HCT116 (cell line): ENCODE measurements at regions of chr2 and their contacts with region 1.

Region 1: GRCh38 chr2:182980115-182980514 is 58.1 kb downstream of the NCKAP1 start:
- DNase-seq: peak; percentile 16
- ATAC-seq: no peak
- H3K4me3 ChIP-seq: no peak overlapping the region
- H3K27ac ChIP-seq: no peak overlapping the region
- H3K4me1 ChIP-seq: no peaks in the 10 kb centered on the region
- H3K27me3 ChIP-seq: no peaks in the 10 kb centered on the region
- CTCF ChIP-seq: peak; percentile 18 to 64 (median 55); a peak in 3 of 6 replicates
- POLR2A ChIP-seq: no peak
- RAD21 ChIP-seq: peak; percentile 66

Region 2: GRCh38 chr2:182186132-182186735 is 793.9 kb before region 1 on chr2:
- CTCF ChIA-PET with region 1: no interaction called
- POLR2A ChIA-PET with region 1: no interaction called
- RAD21 ChIA-PET with region 1: no interaction called
- intact Hi-C with region 1: loop called (anchors 5 kb)
- DNase-seq: peak; percentile 27
- ATAC-seq: peak; percentile 72
- H3K4me3 ChIP-seq: no peak overlapping the region
- H3K27ac ChIP-seq: no peak overlapping the region
- H3K4me1 ChIP-seq: no peaks in the 10 kb centered on the region
- H3K27me3 ChIP-seq: no peaks in the 10 kb centered on the region
- CTCF ChIP-seq: peak; percentile 43 to 87 (median 74); a peak in 5 of 6 replicates
- POLR2A ChIP-seq: no peak
- RAD21 ChIP-seq: peak; percentile 90

Region 3: DNA sequence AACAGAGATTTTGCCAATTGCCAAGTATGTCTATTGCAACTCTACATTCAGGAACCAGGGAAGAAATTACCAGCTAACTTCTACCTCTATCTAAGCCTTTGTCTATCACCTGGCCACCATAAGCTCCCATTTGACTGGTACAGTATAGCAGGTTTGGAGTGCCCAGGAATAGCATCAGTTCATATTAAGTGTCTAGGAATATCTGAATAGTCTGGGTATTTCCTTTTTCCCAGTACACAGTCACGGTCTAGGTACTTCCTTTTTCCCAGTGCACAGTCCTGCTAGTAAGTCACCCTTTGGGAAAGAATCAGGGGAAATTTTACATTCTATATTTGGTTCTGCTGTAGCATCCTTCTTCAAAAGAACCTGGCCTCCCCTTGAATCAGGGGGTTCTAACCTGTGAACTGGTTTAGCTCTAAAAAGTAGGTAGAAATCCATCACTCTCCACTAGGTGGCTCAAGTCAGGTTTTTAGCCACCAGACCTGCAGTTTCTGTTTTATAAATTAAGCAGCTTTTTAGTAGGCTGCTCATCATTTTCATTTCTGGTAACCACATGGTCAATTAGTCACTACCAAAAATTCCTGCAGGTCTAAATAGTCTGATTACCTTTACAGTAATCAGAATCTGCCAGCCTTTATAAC is 313.3 kb before region 1 on chr2:
- CTCF ChIA-PET with region 1: interaction called, 11 read pairs
- POLR2A ChIA-PET with region 1: no interaction called
- RAD21 ChIA-PET with region 1: no interaction called
- intact Hi-C with region 1: loop called (anchors 10 kb)
- DNase-seq: peak; percentile 18
- ATAC-seq: peak; percentile 80
- H3K4me3 ChIP-seq: no peak overlapping the region
- H3K27ac ChIP-seq: no peak overlapping the region
- H3K4me1 ChIP-seq: no peaks in the 10 kb centered on the region
- H3K27me3 ChIP-seq: no peaks in the 10 kb centered on the region
- CTCF ChIP-seq: peak; percentile 31 to 75 (median 51); a peak in 5 of 6 replicates
- POLR2A ChIP-seq: no peak
- RAD21 ChIP-seq: peak; percentile 48

Region 4: GRCh38 chr2:182763311-182763912 is 216.7 kb before region 1 on chr2:
- CTCF ChIA-PET with region 1: interaction called, 45 read pairs
- POLR2A ChIA-PET with region 1: no interaction called
- RAD21 ChIA-PET with region 1: interaction called in 1 of 2 experiments, 6 read pairs
- intact Hi-C with region 1: loop called (anchors 1 kb)
- DNase-seq: peak; percentile 18
- ATAC-seq: peak; percentile 82
- H3K4me3 ChIP-seq: no peak overlapping the region
- H3K27ac ChIP-seq: no peak overlapping the region
- H3K4me1 ChIP-seq: no peaks in the 10 kb centered on the region
- H3K27me3 ChIP-seq: no peaks in the 10 kb centered on the region
- CTCF ChIP-seq: peak; percentile 18 to 53 (median 47); a peak in 5 of 6 replicates
- POLR2A ChIP-seq: no peak
- RAD21 ChIP-seq: no peak; the same call in 1 of the 2 replicates

Region 5: DNA sequence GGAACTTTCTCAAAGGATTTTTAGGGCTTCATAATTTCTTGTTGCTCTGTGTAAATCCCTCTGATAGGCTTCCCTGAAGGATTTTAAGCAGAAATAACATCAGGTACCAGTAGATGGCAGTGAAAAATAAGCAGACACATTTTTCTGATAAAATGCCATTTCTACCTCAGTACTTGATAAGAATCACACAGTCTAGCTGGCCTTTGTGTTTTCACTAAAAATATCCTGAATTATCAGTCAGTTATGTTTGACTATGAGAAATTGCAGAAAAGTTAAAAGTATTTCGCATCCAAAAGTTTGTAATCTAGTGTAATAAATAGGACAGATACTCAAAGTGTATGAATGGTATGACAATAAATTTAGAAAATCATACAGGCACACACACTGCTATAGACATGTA is 195.3 kb before region 1 on chr2:
- CTCF ChIA-PET with region 1: interaction called, 29 read pairs
- POLR2A ChIA-PET with region 1: no interaction called
- RAD21 ChIA-PET with region 1: interaction called in 1 of 2 experiments, 4 read pairs
- intact Hi-C with region 1: loop called (anchors 1 kb)
- DNase-seq: peak; percentile 28
- ATAC-seq: peak; percentile 70
- H3K4me3 ChIP-seq: no peak overlapping the region
- H3K27ac ChIP-seq: no peak overlapping the region
- H3K4me1 ChIP-seq: no peaks in the 10 kb centered on the region
- H3K27me3 ChIP-seq: no peaks in the 10 kb centered on the region
- CTCF ChIP-seq: peak; percentile 46 to 68 (median 49); a peak in 5 of 6 replicates
- POLR2A ChIP-seq: no peak
- RAD21 ChIP-seq: peak; percentile 73

Region 6: GRCh38 chr2:182949572-182950189 is 30.4 kb before region 1 on chr2:
- CTCF ChIA-PET with region 1: interaction called, 14 read pairs
- POLR2A ChIA-PET with region 1: no interaction called
- RAD21 ChIA-PET with region 1: no interaction called
- intact Hi-C with region 1: no loop called
- DNase-seq: no peak
- ATAC-seq: peak; percentile 89
- H3K4me3 ChIP-seq: no peak overlapping the region
- H3K27ac ChIP-seq: peak overlapping the region; percentile 30; the same call in 1 of the 2 replicates
- H3K4me1 ChIP-seq: peaks cover 10% of the 10 kb centered on the region in 2 experiments
- H3K27me3 ChIP-seq: no peaks in the 10 kb centered on the region
- CTCF ChIP-seq: no peak
- POLR2A ChIP-seq: no peak
- RAD21 ChIP-seq: no peak

Region 7: DNA sequence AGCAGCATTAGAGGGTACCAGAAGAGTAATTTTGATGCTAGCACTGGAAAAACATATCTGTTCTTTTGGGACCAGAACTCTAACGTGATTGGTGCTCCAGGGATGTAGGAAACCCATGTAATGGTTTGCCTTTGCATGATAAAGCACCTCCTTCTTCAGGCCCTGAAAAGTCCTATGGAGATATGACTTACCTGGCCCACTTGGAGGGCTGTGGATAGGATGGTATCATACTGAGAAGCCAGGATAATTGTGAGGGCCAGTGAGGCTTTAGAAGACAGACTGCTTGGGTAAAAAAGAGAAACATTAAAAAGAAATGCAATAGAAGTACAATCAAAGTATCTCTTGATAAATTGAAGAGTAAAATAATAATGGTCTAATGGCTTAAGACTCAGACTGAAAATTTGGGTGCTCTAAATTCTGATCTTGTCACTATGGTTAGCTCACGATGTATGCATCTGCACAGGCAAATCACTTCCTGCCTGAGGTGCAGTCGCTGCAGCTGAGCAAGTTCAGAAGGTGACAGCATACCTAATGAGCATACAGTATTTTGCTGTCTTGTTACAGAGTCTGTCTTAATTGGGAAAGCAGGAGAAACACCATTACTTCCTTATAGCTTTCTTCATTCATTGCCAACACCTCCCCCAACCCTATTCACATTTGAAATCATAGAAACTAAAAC is 515.6 kb after region 1 on chr2:
- CTCF ChIA-PET with region 1: no interaction called
- POLR2A ChIA-PET with region 1: no interaction called
- RAD21 ChIA-PET with region 1: no interaction called
- intact Hi-C with region 1: no loop called
- DNase-seq: no peak
- ATAC-seq: no peak
- H3K4me3 ChIP-seq: no peak overlapping the region
- H3K27ac ChIP-seq: no peak overlapping the region
- H3K4me1 ChIP-seq: no peaks in the 10 kb centered on the region; a peak in 1 of 4 replicates
- H3K27me3 ChIP-seq: no peaks in the 10 kb centered on the region
- CTCF ChIP-seq: no peak
- POLR2A ChIP-seq: no peak
- RAD21 ChIP-seq: no peak